ENCODE measurements at regions of chr12 and their contacts with region 1.

Region 1: DNA sequence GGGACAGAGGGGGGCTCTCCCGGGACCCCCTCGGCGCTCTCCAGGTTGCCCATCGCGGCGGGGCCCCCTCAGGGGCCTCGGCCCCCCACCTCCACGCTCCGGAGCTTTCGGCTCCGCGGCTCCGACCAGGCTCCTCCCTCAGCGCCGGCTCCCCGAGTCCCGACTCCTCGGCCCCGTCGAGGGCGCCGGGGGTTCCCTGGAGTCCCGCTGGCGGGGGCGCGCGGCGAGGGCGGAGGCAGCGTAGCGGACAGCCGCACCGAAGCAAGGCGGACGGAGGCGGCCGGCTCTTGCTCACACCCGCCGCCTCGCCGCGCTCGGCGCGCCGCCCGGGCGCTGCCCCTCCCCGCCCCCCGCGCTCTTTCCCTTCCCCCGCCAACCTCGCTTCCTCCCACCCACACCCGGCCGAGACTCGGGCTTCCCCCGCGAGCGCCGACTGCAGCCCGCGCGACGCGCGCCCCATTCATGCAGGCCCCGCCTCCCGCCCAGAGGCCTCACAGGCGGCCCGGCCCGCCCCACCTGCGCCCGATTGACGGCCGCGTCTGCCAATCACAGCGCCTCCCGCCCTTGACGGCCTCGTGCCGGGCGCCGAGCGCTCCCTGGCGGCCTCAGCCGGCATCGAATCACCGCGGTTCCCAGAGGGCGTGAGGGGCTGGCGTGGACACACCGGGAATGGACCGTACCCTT is at the start of gene FMNL3:
- DNase-seq: peak; percentile 91 to 99
- H3K4me3 ChIP-seq: peak within 1 kb of the TSS; percentile 80 to 94
- H3K27ac ChIP-seq: peak within 1 kb of the TSS; percentile 94 to 98
- H3K4me1 ChIP-seq: peaks cover 2 to 9% of the 10 kb centered on the region in 2 donors
- H3K27me3 ChIP-seq: no peaks in the 10 kb centered on the region
- CTCF ChIP-seq: peak; percentile 89 to 99 (median 95)
- total RNA-seq, gene FMNL3: 30.4 TPM

Region 2: GRCh38 chr12:49366652-49367380 is 340.5 kb before region 1 on chr12:
- intact Hi-C with region 1: loop called (anchors 2 kb)
- DNase-seq: peak; percentile 80 to 88
- H3K4me3 ChIP-seq: peak overlapping the region; percentile 58 to 94
- H3K27ac ChIP-seq: peak overlapping the region; percentile 90 to 98
- H3K4me1 ChIP-seq: peaks cover 4 to 6% of the 10 kb centered on the region in 2 donors
- H3K27me3 ChIP-seq: no peaks in the 10 kb centered on the region
- CTCF ChIP-seq: peak in 2 of 3 experiments; percentile 20 to 37

Region 3: DNA sequence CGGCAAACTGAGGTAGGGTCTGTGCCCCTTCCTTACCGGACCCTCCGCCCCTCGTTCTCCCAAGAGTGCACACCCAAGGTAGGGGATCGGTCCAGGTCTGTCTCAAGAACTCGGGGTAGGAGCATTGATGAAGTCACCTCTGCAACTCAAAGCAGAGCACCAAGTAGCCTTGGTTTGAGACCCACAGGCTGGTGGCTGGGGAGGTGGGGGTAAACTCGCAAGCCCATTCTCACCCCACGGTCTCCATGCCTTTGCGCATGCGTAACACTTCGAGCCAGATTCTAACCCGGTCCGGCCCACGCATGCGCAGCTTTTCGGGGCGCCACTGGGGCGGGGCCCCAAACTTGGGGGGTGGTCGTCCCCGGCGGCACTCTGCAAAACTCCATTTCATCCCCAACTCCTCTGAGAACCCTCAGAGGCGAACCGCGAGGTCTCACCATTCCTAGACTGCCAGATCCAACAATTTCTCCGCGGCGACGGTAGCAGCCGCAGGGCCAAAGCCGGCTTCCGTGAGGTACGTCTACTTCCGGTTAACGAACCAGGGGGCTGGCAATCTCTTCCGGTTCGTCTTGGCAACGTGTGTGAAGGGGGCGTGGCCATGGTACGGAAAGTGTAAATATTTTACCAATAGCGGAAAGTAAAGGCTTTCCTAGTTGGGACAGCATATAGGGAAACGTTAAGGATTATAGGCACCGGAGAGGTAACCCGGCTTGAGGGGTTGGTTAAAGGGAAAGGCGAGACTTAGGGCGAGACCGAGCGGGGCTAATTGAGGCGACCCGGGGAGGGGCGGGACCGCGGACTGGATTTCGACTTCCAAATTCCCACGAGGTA is 139.4 kb before region 1 on chr12 and contains the start of gene MCRS1:
- intact Hi-C with region 1: loop called (anchors 1 kb)
- DNase-seq: peak; percentile 36 to 93
- H3K4me3 ChIP-seq: peak within 1 kb of the TSS; percentile 76 to 87
- H3K27ac ChIP-seq: peak within 1 kb of the TSS; percentile 67 to 88
- H3K4me1 ChIP-seq: peaks cover 5 to 26% of the 10 kb centered on the region in 2 donors
- H3K27me3 ChIP-seq: no peaks in the 10 kb centered on the region
- CTCF ChIP-seq: no peak
- total RNA-seq, gene MCRS1: 66.8 TPM

Region 4: GRCh38 chr12:49623142-49623904 is 83.9 kb before region 1 on chr12 and contains the start of gene PRPF40B:
- intact Hi-C with region 1: loop called (anchors 1 kb)
- DNase-seq: peak; percentile 49 to 93
- H3K4me3 ChIP-seq: peak within 1 kb of the TSS; percentile 49 to 77
- H3K27ac ChIP-seq: peak within 1 kb of the TSS; percentile 89 to 96
- H3K4me1 ChIP-seq: peaks cover 6 to 11% of the 10 kb centered on the region in 2 donors
- H3K27me3 ChIP-seq: no peaks in the 10 kb centered on the region
- CTCF ChIP-seq: peak; percentile 49 to 60 (median 58)
- total RNA-seq, gene PRPF40B: 9.5 TPM

Region 5: GRCh38 chr12:49644620-49644994 is 62.7 kb before region 1 on chr12:
- intact Hi-C with region 1: loop called (anchors 1 kb)
- DNase-seq: peak in 1 of 2 donors; percentile 88
- H3K4me3 ChIP-seq: no peak overlapping the region
- H3K27ac ChIP-seq: peak overlapping the region; percentile 21 to 23
- H3K4me1 ChIP-seq: peaks cover 0 to 19% of the 10 kb centered on the region in 2 donors
- H3K27me3 ChIP-seq: no peaks in the 10 kb centered on the region
- CTCF ChIP-seq: peak; percentile 93 to 98 (median 93)

Region 6: GRCh38 chr12:49673446-49674317 is 33.6 kb before region 1 on chr12:
- intact Hi-C with region 1: loop called (anchors 1 kb)
- DNase-seq: peak; percentile 81 to 96
- H3K4me3 ChIP-seq: no peak overlapping the region
- H3K27ac ChIP-seq: peak overlapping the region; percentile 84 to 97
- H3K4me1 ChIP-seq: peaks cover 21 to 43% of the 10 kb centered on the region in 2 donors
- H3K27me3 ChIP-seq: no peaks in the 10 kb centered on the region
- CTCF ChIP-seq: peak; percentile 29 to 76 (median 35)

Region 7: DNA sequence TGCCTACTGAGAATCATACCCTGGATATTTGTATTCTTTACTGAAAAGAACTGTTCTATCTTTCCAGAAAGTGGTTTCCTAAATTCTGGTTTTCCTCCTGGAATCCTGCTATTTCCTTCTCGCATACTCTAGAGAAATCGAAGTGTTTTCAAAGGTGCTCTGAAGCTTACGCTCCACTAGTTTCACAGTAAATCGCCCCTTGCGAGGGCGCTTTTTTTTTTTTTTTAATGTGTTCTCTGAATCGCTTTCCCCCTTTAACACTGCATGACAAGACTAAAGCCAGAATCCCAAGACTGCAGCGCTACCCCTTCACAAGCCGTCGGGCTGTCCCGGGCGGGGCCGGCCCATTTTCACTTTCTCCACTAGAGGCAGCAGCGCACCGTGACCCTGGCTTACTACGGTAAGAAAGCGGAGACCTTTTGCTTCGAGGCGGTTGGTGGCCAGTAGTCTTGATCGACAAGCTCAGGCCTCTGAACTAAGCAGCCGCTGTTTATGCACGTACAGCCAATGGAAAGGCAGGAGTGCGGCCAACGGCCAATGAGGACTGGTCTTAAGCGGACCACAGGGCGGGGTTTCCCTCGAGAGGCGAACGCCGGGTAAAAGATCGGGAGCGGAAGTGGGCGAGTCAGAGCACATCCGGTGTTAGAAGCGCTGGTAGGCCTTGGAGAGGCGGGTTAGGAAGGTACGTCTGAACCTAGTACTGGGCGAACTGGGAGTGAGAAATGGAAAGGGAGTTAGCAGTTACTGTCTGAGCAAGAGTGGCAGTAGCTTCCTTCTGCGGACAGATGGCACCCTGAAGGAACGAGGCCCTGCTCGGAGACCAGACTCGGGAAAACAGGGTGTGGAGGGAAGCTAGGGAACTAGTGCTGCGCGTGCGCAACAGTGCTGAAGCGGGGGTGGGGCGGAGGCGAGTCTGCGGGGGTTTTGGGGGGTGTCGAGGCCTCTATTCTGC is 33.9 kb after region 1 on chr12 and contains the start of gene TMBIM6:
- intact Hi-C with region 1: loop called (anchors 1 kb)
- DNase-seq: peak; percentile 100
- H3K4me3 ChIP-seq: peak within 1 kb of the TSS; percentile 72
- H3K27ac ChIP-seq: peak within 1 kb of the TSS; percentile 97
- H3K4me1 ChIP-seq: peaks cover 5 to 21% of the 10 kb centered on the region in 2 donors
- H3K27me3 ChIP-seq: no peaks in the 10 kb centered on the region
- CTCF ChIP-seq: peak; percentile 86 to 94 (median 92)
- total RNA-seq, gene TMBIM6: 188 TPM

Measured in ascending aorta (tissue), 2 donors.